ENCODE measurements at regions of chr9 and their contacts with region 1.

Region 1: GRCh38 chr9:83396342-83396741 is 141.9 kb downstream of the FRMD3 start:
- DNase-seq: no peak
- ATAC-seq: no peak
- H3K4me3 ChIP-seq: no peak overlapping the region
- H3K27ac ChIP-seq: no peak overlapping the region
- H3K4me1 ChIP-seq: peaks cover 0 to 6% (median 0%) of the 10 kb centered on the region in 12 donors
- H3K27me3 ChIP-seq: no peaks in the 10 kb centered on the region
- CTCF ChIP-seq: no peak
- POLR2A ChIP-seq: no peak

Region 2: DNA sequence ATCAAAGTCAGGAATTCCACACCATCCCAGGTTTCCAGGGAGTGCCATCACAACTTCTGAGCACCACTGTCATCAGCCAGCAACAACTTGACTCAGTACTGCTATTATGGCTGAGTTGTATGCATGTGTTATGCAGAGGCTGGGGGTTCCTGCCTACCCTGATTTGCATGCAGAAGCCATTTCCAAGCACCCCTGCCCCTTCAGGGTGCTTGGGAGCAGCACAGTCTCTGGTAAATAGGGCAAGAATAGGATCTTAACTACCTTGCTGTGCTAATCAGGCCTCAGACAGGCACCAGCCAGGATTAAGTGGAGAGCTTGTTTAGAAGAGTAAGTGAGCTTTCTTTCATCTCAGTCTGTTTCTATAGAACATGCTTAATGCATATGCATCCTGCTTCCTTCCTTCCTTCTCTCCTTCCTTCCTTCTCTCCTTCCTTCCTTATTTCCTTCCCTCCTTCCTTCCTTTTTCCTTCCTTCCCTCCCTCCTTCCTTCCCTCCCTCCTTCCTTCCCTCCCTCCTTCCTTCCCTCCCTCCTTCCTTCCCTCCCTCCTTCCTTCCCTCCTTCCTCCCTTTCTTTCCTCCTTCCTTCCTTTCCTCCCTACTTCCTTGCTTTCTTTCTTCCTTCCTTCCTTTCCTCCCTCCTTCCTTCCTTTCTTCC is 33.9 kb before region 1 on chr9:
- intact Hi-C with region 1: loop called in 1 of 10 experiments (anchors 5 kb)
- DNase-seq: no peak
- ATAC-seq: no peak
- H3K4me3 ChIP-seq: no peak overlapping the region
- H3K27ac ChIP-seq: no peak overlapping the region
- H3K4me1 ChIP-seq: peaks cover 0 to 12% (median 5%) of the 10 kb centered on the region in 12 donors
- H3K27me3 ChIP-seq: no peaks in the 10 kb centered on the region
- CTCF ChIP-seq: no peak
- POLR2A ChIP-seq: no peak

Region 3: DNA sequence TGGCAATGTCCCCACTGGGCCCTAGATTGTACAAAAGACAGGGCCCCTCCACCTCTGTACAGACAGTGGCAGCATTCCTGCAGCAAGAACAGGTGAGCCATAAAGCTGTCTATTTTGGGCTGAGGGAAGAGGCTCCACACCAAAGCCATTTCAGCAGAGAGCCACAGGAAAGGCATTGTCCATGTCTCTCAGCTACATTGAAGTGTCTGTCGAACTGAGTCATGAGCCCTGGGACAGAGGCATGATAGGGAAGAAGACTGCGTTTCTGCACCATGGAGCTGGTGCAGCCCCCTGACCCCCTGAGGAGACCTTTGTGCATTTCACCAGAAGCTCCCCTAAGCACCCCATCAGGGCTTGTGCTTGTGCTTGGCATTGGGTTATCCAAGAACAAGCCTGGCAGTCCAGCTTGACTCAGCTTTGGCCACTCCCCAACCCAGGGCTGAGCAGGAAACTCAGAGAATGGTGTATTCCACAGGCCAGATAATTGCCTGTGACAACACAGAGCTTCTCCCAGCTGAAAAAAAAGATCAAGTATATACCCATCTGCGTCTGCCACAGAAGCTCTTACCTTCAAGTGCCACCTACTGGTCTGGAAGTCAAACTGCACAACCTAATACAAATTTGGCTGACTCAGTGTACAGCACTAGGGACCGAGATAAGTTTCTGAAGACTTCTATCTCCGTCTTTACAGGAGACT is 147.8 kb after region 1 on chr9:
- intact Hi-C with region 1: no loop called
- DNase-seq: peak in 3 of 5 donors; percentile 35 to 50 (median 43)
- ATAC-seq: peak; percentile 73 to 92 (median 92)
- H3K4me3 ChIP-seq: no peak overlapping the region
- H3K27ac ChIP-seq: peak overlapping the region in 1 of 12 donors; percentile 21
- H3K4me1 ChIP-seq: peaks cover 0 to 12% (median 3%) of the 10 kb centered on the region in 12 donors
- H3K27me3 ChIP-seq: no peaks in the 10 kb centered on the region
- CTCF ChIP-seq: peak; percentile 64 to 86 (median 77)
- POLR2A ChIP-seq: no peak

Measured in heart left ventricle (tissue), 16 donors.